GM18951 (cell line): ENCODE measurements at regions of chr9 and their contacts with region 1.

Region 1: GRCh38 chr9:98796364-98797101 is at the start of gene ANKS6:
- POLR2A ChIP-seq: peak; percentile 49

Region 2: DNA sequence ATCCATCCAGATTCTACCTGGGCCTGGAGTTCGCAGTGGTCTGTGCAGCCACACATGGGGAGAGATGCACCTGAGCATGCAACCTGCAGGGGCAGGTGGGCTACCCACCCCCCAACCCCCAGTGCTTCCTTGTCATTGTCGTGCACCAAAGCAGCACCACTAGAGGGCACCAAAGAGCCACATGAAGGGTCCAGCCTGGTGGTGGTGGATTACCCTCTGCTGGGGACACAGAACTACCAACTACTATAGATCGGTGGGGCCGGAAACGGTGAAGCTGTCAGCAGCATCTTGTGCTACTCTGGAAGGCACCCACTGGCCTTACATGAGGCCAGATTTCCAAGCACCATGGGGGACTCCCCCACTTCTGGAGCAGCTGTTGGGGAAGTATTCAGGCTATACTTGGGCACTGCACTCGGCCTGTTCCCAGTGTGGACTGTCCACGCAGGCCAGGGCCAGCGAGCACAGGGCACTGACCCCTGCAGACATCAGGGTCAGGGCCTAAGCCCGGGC is 480.9 kb before region 1 on chr9:
- in situ Hi-C with region 1: loop called (anchors 25 kb)
- POLR2A ChIP-seq: no peak

Region 3: DNA sequence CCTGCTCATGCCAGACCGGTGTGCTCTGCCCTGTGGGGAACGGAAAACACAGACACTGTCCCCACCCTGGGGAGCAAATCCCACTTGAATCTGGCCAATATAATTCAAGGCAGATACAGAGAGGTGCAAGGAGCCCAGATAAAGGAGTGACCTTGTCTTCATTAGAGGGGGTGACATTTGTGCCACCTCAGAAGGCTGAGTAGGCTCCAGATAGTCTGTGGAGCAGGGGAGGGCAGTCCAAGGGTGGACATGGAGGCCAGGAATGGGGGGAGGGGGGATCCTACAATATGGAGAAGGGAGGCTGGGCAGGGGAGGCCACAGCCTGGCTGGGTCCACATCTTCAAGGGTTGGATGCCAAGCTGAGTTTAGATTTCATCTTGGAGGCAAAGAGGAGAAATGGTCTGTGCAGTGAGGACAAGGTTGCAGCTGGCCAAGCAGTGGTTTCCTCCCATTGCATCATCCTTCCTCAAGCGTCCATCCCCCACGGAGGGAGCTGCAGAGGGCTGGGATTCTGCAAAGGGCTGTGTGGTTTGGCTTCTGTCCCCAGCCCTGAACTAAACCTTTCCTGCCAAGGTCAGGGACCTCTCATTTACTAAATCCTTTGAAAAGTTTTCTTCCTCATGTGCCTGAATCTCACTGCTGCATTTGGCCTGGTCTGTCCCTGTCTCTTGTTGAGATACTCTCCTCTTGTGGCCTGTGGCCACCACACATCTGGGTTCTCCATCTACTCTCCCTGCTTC is 71.1 kb after region 1 on chr9:
- in situ Hi-C with region 1: no loop called
- POLR2A ChIP-seq: no peak